Endothelial cell of umbilical vein (primary cell): ENCODE measurements at regions of chr17 and their contacts with region 1.

Region 1: DNA sequence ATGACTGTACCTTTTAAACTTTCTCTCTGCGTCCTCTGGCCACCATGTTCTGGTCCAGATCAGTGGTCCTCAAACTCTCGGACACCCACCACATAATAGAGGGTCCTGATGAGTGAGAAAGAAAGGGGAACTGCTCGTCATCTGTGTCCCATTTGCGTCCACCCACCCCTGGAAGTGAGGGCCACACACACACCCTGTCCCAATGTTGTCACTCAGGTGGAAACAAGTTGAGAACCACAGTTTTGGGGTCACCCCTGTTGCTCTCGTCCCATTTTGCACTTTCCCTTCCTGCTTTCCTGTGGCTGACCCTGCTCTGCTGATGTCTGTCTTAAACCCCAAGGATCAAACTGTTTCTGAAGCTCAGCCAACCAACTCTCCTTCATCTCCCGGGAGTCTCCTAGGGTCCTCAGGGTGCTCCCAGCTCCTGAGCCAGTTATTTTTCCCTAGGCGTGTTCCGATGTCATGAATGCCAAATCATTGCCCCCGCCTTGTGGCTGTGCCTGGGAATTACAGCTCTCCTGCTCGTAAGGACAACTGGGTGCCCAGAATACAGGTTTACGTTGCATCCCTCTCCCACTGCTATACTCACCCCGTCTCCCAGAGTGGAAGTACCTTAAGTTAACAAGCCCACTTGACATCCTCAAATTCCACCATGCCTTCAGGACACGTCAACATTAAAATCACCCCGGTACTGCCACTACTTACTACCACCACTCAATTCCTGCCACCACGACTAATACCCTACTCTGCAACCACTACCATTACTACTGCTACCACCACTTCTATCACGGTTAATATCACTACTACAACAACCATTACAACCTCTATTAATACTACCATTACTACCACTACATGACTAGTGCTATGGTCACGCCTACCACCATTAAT is 26.0 kb upstream of the HNF1B start:
- DNase-seq: peak; percentile 61
- H3K4me3 ChIP-seq: no peak overlapping the region
- H3K27ac ChIP-seq: no peak overlapping the region
- H3K4me1 ChIP-seq: no peaks in the 10 kb centered on the region
- H3K27me3 ChIP-seq: no peaks in the 10 kb centered on the region
- CTCF ChIP-seq: peak; percentile 73 to 80
- POLR2A ChIP-seq: no peak

Region 2: DNA sequence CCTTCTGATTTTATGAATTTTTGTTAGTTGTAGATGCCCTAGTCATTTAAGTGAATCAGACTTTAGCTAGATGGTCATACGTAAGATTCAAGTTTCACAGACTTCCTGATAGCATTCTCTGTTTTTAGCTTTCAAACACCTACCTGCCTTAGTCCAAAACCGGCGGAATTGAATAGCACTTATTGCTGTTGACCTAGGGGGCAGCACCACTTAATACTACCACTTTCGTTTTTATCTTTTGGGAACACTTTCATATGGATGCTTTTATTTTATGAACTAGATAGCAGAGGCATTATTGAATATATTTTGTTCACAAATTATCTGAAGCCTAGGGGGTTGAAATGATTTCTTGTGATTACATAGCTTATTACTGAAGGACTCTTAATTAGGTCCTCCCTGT is 332.7 kb before region 1 on chr17:
- CTCF ChIA-PET with region 1: no interaction called
- POLR2A ChIA-PET with region 1: no interaction called
- dilution Hi-C with region 1: no loop called
- intact Hi-C with region 1: no loop called
- DNase-seq: peak; percentile 23
- H3K4me3 ChIP-seq: no peak overlapping the region
- H3K27ac ChIP-seq: no peak overlapping the region
- H3K4me1 ChIP-seq: peaks cover 2% of the 10 kb centered on the region
- H3K27me3 ChIP-seq: no peaks in the 10 kb centered on the region
- CTCF ChIP-seq: peak in 1 of 2 donors; percentile 19
- POLR2A ChIP-seq: no peak

Region 3: GRCh38 chr17:37527249-37527851 is 243.5 kb before region 1 on chr17:
- CTCF ChIA-PET with region 1: interaction called, 31 read pairs
- POLR2A ChIA-PET with region 1: no interaction called
- dilution Hi-C with region 1: no loop called
- intact Hi-C with region 1: loop called (anchors 5 kb)
- DNase-seq: peak; percentile 56
- H3K4me3 ChIP-seq: no peak overlapping the region
- H3K27ac ChIP-seq: no peak overlapping the region
- H3K4me1 ChIP-seq: no peaks in the 10 kb centered on the region
- H3K27me3 ChIP-seq: no peaks in the 10 kb centered on the region
- CTCF ChIP-seq: peak; percentile 57 to 66
- POLR2A ChIP-seq: no peak

Region 4: DNA sequence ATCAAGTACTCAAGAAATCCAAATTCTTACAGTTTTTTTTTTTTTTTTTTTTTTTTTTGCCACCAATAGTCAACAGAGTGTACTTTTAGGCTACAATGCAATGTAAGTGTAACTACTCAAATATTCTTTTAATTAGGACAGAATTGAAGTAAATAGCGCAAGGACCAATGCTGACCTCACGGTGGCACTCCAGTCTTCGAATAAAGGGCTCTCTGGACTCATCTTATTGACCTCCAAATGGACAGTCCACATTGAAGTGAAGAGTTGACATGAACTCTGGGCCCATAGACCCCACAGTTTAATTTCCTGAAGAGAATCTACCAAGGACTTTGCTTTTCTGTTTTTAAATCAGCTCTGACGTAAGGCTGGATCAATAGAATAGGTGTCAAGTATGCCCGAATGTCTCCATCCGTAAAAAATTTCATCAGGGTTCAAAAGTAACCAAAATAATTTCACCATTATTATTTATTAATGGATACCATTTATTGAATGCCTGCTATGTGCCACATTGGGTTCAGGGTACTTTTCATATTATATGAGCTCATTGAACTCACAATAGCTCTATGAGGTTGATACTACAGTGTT is 120.4 kb before region 1 on chr17:
- CTCF ChIA-PET with region 1: interaction called, 128 read pairs
- POLR2A ChIA-PET with region 1: interaction called, 3 read pairs
- dilution Hi-C with region 1: no loop called
- intact Hi-C with region 1: loop called (anchors 1 kb)
- DNase-seq: peak; percentile 62
- H3K4me3 ChIP-seq: no peak overlapping the region
- H3K27ac ChIP-seq: peak overlapping the region; percentile 80
- H3K4me1 ChIP-seq: peaks cover 30% of the 10 kb centered on the region
- H3K27me3 ChIP-seq: no peaks in the 10 kb centered on the region
- CTCF ChIP-seq: peak; percentile 45 to 49
- POLR2A ChIP-seq: no peak

Region 5: GRCh38 chr17:37735165-37735564 is 35.7 kb before region 1 on chr17:
- CTCF ChIA-PET with region 1: interaction called, 10 read pairs
- POLR2A ChIA-PET with region 1: no interaction called
- dilution Hi-C with region 1: no loop called
- intact Hi-C with region 1: no loop called
- DNase-seq: no peak
- H3K4me3 ChIP-seq: no peak overlapping the region
- H3K27ac ChIP-seq: no peak overlapping the region
- H3K4me1 ChIP-seq: no peaks in the 10 kb centered on the region
- H3K27me3 ChIP-seq: peaks cover 29% of the 10 kb centered on the region in 2 experiments
- CTCF ChIP-seq: no peak
- POLR2A ChIP-seq: no peak

Region 6: DNA sequence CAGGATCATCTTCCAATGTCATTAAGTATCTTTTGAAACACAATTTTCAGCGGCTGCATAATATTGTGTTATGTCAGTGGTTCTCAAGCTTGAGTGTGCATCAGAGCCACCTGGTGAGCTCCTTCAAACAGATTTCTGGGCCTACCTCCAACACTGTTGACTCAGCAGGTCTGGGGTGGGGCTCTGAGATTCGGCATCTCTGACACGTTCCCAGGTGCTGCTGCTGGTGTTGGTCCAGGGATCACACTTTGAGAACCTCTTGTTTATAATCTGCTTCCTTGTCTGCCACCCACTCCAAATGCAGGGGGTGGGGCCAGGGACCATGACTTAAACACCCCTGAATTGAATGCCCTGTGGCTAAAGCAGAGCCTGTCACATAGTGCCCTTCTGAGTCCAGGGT is 47.8 kb after region 1 on chr17:
- CTCF ChIA-PET with region 1: interaction called, 21 read pairs
- POLR2A ChIA-PET with region 1: no interaction called
- dilution Hi-C with region 1: no loop called
- intact Hi-C with region 1: no loop called
- DNase-seq: no peak
- H3K4me3 ChIP-seq: no peak overlapping the region
- H3K27ac ChIP-seq: no peak overlapping the region
- H3K4me1 ChIP-seq: peaks cover 3% of the 10 kb centered on the region
- H3K27me3 ChIP-seq: peaks cover 9% of the 10 kb centered on the region in 2 experiments
- CTCF ChIP-seq: no peak
- POLR2A ChIP-seq: no peak